ENCODE measurements at regions of chr4 and their contacts with region 1.

Region 1: GRCh38 chr4:24488399-24489164 is 95.8 kb downstream of the DHX15 start:
- DNase-seq: peak; percentile 57 to 77 (median 67)
- H3K4me3 ChIP-seq: no peak overlapping the region
- H3K27ac ChIP-seq: no peak overlapping the region
- H3K4me1 ChIP-seq: no peaks in the 10 kb centered on the region
- H3K27me3 ChIP-seq: peaks cover 0 to 7% (median 2%) of the 10 kb centered on the region in 5 experiments

Region 2: DNA sequence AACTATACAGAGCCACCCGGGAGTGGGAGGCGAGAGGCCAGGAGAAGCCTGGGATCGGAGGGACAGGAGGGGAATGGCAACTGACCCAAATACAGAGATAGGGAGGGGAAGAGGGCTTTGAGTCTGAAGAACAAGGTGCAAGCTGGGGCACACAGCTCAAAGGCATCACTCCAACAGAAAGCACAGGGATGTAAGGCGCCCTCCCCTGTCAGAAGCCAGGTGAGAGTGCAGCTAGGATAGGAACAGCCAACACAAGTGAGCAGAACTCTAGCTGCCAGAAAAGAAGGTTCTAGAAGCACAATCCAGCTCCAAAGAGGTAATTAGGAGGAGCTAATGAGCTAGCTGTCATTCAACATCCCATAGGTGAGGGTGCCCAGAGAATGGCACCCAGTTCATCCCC is 136.5 kb before region 1 on chr4:
- CTCF ChIA-PET with region 1: no interaction called
- POLR2A ChIA-PET with region 1: no interaction called
- DNase-seq: no peak
- H3K4me3 ChIP-seq: no peak overlapping the region
- H3K27ac ChIP-seq: no peak overlapping the region
- H3K4me1 ChIP-seq: no peaks in the 10 kb centered on the region
- H3K27me3 ChIP-seq: no peaks in the 10 kb centered on the region

Region 3: GRCh38 chr4:24476282-24476681 is 12.3 kb before region 1 on chr4:
- CTCF ChIA-PET with region 1: interaction called, 29 read pairs
- POLR2A ChIA-PET with region 1: no interaction called
- DNase-seq: peak; percentile 25 to 55 (median 53)
- H3K4me3 ChIP-seq: no peak overlapping the region
- H3K27ac ChIP-seq: no peak overlapping the region
- H3K4me1 ChIP-seq: peaks cover 4 to 24% (median 20%) of the 10 kb centered on the region in 4 experiments
- H3K27me3 ChIP-seq: peaks cover 9 to 55% (median 21%) of the 10 kb centered on the region in 5 experiments

Region 4: GRCh38 chr4:24686871-24687680 is 198.5 kb after region 1 on chr4:
- CTCF ChIA-PET with region 1: interaction called, 11 read pairs
- POLR2A ChIA-PET with region 1: no interaction called
- DNase-seq: peak; percentile 42 to 50 (median 42)
- H3K4me3 ChIP-seq: no peak overlapping the region
- H3K27ac ChIP-seq: no peak overlapping the region
- H3K4me1 ChIP-seq: peaks cover 0 to 2% (median under 1%) of the 10 kb centered on the region in 4 experiments
- H3K27me3 ChIP-seq: no peaks in the 10 kb centered on the region